GM12878 (cell line): ENCODE measurements at regions of chr1 and their contacts with region 1.

Region 1: DNA sequence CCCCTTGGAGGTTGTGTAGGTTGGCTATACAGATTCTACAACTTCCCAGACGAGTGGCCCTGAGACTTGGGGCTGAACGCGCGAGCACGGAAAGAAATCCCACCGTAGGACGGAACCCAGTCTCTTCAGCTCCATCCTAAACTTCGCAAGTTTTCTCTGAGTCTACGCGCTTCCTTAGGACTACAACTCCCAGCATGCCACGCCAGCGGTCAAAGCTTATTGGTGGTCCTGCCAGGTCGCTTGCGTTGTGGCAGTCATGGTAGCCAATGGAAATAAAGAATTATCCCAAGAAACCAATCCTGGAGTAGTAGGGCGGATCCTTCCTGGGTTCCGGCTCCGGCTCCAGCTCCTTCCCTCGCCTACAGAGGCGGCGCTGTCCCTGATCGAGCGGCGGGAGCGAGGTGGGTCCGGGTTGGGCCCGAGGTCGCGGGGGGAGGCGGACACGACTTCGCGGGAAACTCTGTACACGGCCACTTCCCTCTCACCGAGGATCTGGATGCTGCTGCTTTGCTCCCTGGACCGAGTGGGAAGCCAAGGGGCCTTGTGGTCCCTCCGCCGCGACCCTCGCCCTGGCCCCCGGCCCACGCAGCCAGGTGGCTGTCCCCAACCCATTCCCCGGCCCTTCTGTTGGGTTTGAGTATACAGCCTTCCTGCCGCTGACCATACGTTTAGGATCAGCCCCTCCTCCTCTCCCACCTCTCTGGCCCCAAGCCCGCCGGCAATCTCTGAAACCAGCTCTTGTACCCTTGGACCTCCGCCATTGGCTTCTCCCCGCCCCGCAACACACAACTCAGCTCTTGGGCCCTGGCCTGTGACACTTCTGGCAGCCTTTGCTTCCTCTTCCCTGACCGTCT is at the start of gene ZNF691:
- DNase-seq: peak; percentile 92
- ATAC-seq: peak; percentile 98
- H3K4me3 ChIP-seq: peak within 1 kb of the TSS; percentile 97
- H3K27ac ChIP-seq: peak within 1 kb of the TSS; percentile 78
- H3K4me1 ChIP-seq: no peaks in the 10 kb centered on the region; the same call in 1 of the 2 replicates
- H3K27me3 ChIP-seq: no peaks in the 10 kb centered on the region
- CTCF ChIP-seq: peak; percentile 35 to 45 (median 39)
- EP300 ChIP-seq: no peak
- POLR2A ChIP-seq: peak; percentile 90
- RAD21 ChIP-seq: no peak
- polyA plus RNA-seq, gene ZNF691: 14.9 to 16.2 TPM

Region 2: DNA sequence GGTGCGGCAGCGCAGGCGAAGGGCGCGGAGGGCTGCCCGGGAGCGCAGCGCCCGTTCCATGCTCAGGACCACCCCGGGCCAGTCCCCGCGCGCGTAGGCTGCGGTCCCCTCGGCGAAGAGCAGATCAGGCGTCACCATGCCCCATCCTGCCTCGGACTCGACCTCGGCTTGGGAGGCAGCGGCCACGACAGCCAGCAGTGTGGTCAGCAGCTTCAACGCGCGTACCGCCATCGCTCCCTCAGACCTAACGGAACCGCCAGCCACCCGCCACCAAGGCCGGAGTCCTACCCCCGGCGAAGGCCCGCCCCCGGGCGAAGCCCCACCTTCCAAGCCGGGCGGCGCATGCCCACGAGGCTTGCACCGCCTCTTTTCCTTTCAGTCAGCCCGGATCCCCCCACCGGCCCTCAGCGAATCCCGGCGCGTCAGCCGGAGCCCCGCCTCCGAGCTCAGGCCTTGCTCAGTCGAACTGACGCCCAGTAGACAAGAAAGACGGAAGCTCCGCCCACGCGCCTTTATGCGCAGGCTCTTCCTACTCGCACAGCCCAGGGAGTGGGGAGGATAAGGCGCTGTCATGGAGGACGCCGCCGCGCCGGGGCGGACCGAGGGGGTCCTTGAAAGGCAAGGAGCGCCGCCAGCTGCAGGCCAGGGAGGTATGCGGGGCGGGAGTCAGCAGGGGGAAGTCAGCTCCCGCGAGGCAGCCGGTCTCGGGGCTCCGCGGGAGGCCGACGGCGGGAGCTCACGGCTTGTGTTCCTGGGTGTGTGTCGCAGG is 79.6 kb before region 1 on chr1 and contains the starts of genes C1orf50 and P3H1:
- CTCF ChIA-PET with region 1: interaction called, 21 read pairs
- POLR2A ChIA-PET with region 1: interaction called, 53 read pairs
- RAD21 ChIA-PET with region 1: interaction called, 18 read pairs
- SMC1A ChIA-PET with region 1: interaction called, 7 read pairs
- in situ Hi-C with region 1: no loop called
- intact Hi-C with region 1: loop called (anchors 5 kb)
- DNase-seq: peak; percentile 93
- ATAC-seq: peak; percentile 93
- H3K4me3 ChIP-seq: peak within 1 kb of the TSS; percentile 95
- H3K27ac ChIP-seq: peak within 1 kb of the TSS; percentile 84
- H3K4me1 ChIP-seq: peaks cover 4% of the 10 kb centered on the region; the same call in 1 of the 2 replicates
- H3K27me3 ChIP-seq: no peaks in the 10 kb centered on the region
- CTCF ChIP-seq: no peak
- EP300 ChIP-seq: no peak
- POLR2A ChIP-seq: peak; percentile 99
- RAD21 ChIP-seq: no peak
- polyA plus RNA-seq, gene C1orf50: 1.2 to 3.3 TPM
- polyA plus RNA-seq, gene P3H1: 0.72 to 3.1 TPM

Region 3: GRCh38 chr1:42777852-42778251 is 68.6 kb before region 1 on chr1:
- CTCF ChIA-PET with region 1: interaction called, 12 read pairs
- POLR2A ChIA-PET with region 1: no interaction called
- RAD21 ChIA-PET with region 1: interaction called, 4 read pairs
- SMC1A ChIA-PET with region 1: interaction called, 4 read pairs
- in situ Hi-C with region 1: no loop called
- intact Hi-C with region 1: no loop called
- DNase-seq: no peak
- ATAC-seq: peak; percentile 77
- H3K4me3 ChIP-seq: no peak overlapping the region
- H3K27ac ChIP-seq: no peak overlapping the region
- H3K4me1 ChIP-seq: peaks cover 5% of the 10 kb centered on the region; the same call in 1 of the 2 replicates
- H3K27me3 ChIP-seq: no peaks in the 10 kb centered on the region
- CTCF ChIP-seq: peak; percentile 69 to 76 (median 71)
- EP300 ChIP-seq: no peak
- POLR2A ChIP-seq: no peak
- RAD21 ChIP-seq: peak; percentile 85

Region 4: GRCh38 chr1:42816585-42817434 is 29.7 kb before region 1 on chr1 and contains the starts of genes ERMAP and SVBP:
- CTCF ChIA-PET with region 1: interaction called, 16 read pairs
- POLR2A ChIA-PET with region 1: interaction called, 15 read pairs
- RAD21 ChIA-PET with region 1: interaction called, 7 read pairs
- SMC1A ChIA-PET with region 1: interaction called, 27 read pairs
- in situ Hi-C with region 1: no loop called
- intact Hi-C with region 1: no loop called
- DNase-seq: peak; percentile 43
- ATAC-seq: peak; percentile 95
- H3K4me3 ChIP-seq: peak within 1 kb of the TSS; percentile 84
- H3K27ac ChIP-seq: peak within 1 kb of the TSS; percentile 87
- H3K4me1 ChIP-seq: peaks cover 4% of the 10 kb centered on the region; the same call in 1 of the 2 replicates
- H3K27me3 ChIP-seq: no peaks in the 10 kb centered on the region
- CTCF ChIP-seq: peak in 1 of 3 experiments; percentile 24; a peak in 2 of 6 replicates
- EP300 ChIP-seq: no peak
- POLR2A ChIP-seq: peak; percentile 90
- RAD21 ChIP-seq: no peak
- polyA plus RNA-seq, gene ERMAP: 1.4 to 2.2 TPM
- polyA plus RNA-seq, gene SVBP: 19.8 to 29.5 TPM

Region 5: DNA sequence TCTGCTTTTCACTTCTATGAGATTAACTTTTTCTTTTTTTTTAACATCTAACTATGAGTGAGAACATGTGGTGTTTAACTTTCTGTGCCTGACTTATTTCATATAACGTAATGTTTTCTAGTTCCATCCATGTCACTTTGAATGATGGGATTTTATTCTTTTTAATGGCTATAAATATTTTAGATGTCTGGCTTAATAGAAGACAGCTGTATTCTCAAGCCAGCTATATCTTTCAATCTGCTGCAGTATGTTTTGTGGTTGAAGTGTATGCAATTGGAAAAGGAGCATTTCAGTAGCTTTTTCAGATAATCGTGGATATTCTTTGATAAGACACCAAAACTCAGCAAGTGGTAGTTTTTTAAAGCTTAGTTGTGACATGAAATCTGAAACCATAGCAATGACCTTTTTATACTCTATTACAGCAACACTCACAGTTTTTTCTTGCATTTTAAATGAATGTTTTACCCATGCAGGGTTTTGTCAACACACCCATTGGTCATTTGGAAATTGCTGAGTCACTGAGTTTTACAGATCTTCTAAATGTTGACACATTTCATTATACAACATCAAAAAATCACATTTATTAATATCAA is 23.6 kb before region 1 on chr1:
- CTCF ChIA-PET with region 1: interaction called, 16 read pairs
- POLR2A ChIA-PET with region 1: interaction called, 15 read pairs
- RAD21 ChIA-PET with region 1: interaction called, 7 read pairs
- SMC1A ChIA-PET with region 1: interaction called, 27 read pairs
- in situ Hi-C with region 1: no loop called
- intact Hi-C with region 1: no loop called
- DNase-seq: no peak
- ATAC-seq: no peak
- H3K4me3 ChIP-seq: no peak overlapping the region
- H3K27ac ChIP-seq: no peak overlapping the region
- H3K4me1 ChIP-seq: no peaks in the 10 kb centered on the region
- H3K27me3 ChIP-seq: no peaks in the 10 kb centered on the region
- CTCF ChIP-seq: no peak
- EP300 ChIP-seq: no peak
- POLR2A ChIP-seq: no peak
- RAD21 ChIP-seq: no peak

Region 6: DNA sequence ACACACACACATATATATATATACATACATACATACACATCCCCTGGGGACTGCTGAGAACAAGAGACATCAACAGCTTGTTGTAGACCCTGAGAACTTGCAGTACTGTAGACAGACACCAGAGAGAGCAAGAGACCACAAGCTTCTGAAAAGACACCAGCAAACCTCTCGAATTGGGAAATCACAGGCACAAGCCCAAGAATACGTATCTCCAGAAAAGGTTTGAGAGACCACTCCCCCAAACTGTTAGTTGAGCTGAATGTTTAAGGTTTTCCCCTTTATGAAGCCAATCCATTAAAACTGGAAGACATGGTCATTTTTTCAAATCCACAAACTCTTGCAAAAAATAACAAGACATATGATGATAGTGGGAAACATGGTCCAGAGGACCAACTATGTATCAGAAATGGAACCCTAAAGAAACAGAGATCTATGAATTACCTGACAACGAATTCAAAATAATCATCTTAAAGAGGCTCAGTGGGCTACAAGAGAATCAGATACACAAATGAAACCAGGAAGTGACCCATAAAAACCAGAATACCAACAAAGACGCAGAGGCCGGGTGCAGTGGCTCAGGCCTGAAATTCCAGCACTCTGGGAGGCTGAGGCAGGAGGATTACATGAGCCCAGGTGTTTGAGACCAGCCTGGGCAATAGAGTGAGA is 67.1 kb after region 1 on chr1:
- CTCF ChIA-PET with region 1: interaction called, 12 read pairs
- POLR2A ChIA-PET with region 1: no interaction called
- RAD21 ChIA-PET with region 1: interaction called, 10 read pairs
- SMC1A ChIA-PET with region 1: interaction called, 3 read pairs
- in situ Hi-C with region 1: no loop called
- intact Hi-C with region 1: no loop called
- DNase-seq: peak; percentile 64
- ATAC-seq: peak; percentile 88
- H3K4me3 ChIP-seq: no peak overlapping the region
- H3K27ac ChIP-seq: no peak overlapping the region
- H3K4me1 ChIP-seq: no peaks in the 10 kb centered on the region
- H3K27me3 ChIP-seq: no peaks in the 10 kb centered on the region
- CTCF ChIP-seq: peak; percentile 72 to 76 (median 74)
- EP300 ChIP-seq: no peak
- POLR2A ChIP-seq: no peak
- RAD21 ChIP-seq: peak; percentile 91

Region 7: DNA sequence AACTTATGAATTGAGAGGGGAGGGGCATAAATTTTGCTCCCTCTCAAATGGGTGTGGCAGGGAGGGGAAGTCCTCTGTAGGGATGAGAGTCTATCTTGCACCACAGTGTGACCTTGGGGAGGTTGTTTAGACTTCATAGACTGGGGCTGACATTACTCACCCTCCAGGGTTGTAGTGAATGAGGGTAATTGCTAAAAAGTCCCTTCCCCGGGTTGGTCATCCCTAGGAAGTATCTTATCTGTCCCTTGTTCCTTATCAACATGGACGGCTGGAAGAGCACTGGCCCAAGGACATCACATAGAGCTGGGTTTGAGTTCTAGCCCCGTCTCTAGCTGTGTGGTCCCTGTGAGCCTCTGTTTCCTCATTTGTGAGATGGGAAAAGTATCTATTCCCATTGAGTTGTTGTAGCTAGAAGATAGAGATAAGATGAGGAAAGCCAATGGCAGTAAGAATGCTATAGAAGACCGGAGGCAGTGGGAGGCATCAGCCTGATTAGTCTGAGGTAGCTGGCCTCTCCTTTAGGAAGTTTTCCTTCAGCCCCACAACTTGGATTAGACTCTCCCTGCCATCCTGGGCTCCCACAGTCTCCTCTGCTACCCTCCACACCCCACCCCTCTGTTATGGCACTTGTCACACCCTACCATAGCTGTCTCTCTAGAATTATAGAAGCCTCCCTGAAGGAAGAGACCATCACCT is 164.7 kb after region 1 on chr1:
- CTCF ChIA-PET with region 1: no interaction called
- POLR2A ChIA-PET with region 1: no interaction called
- RAD21 ChIA-PET with region 1: no interaction called
- SMC1A ChIA-PET with region 1: no interaction called
- in situ Hi-C with region 1: no loop called
- intact Hi-C with region 1: no loop called
- DNase-seq: no peak
- ATAC-seq: no peak
- H3K4me3 ChIP-seq: no peak overlapping the region
- H3K27ac ChIP-seq: no peak overlapping the region
- H3K4me1 ChIP-seq: no peaks in the 10 kb centered on the region
- H3K27me3 ChIP-seq: no peaks in the 10 kb centered on the region; a peak in 3 of 4 replicates
- CTCF ChIP-seq: no peak
- EP300 ChIP-seq: no peak
- POLR2A ChIP-seq: no peak
- RAD21 ChIP-seq: no peak